Activated CD4-positive, alpha-beta memory T cell treated with anti-CD3 and anti-CD28 coated beads for 36 hours (primary cell): ENCODE measurements at regions of chr5 and their contacts with region 1.

Region 1: GRCh38 chr5:72319976-72320752 is at the starts of genes MRPS27 and PTCD2:
- DNase-seq: peak; percentile 97
- H3K4me3 Mint-ChIP-seq: peak within 1 kb of the TSS; percentile 91
- H3K27ac Mint-ChIP-seq: peak within 1 kb of the TSS; percentile 85
- H3K4me1 Mint-ChIP-seq: peaks cover 32% of the 10 kb centered on the region
- H3K27me3 Mint-ChIP-seq: no peaks in the 10 kb centered on the region
- total RNA-seq, gene MRPS27: 85.9 to 91.4 TPM
- total RNA-seq, gene PTCD2: 10.8 to 12.1 TPM

Region 2: DNA sequence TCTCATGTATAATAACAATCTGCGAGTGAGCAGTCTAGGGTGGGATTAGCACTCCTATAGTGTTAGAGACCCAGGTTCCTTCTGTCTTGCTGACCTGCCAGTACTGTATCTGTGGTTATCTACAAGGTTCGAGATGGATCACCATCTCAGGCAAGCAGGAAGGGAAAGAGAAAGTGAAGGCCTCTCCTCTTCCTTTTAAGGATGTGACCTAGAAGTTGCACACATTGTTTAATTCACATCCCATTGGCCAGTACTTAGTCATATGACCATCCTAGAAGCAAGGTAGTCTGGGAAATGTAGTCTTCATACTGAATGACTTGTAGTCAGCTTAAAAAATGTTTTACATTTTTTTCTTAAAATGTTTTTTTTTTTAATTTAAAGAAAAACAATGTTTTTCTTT is 432.5 kb before region 1 on chr5:
- CTCF ChIA-PET with region 1: no interaction called
- POLR2A ChIA-PET with region 1: no interaction called
- intact Hi-C with region 1: loop called (anchors 1 kb)
- DNase-seq: no peak
- H3K4me3 Mint-ChIP-seq: peak overlapping the region; percentile 24
- H3K27ac Mint-ChIP-seq: no peak overlapping the region
- H3K4me1 Mint-ChIP-seq: no peaks in the 10 kb centered on the region
- H3K27me3 Mint-ChIP-seq: peaks cover 20% of the 10 kb centered on the region

Region 3: DNA sequence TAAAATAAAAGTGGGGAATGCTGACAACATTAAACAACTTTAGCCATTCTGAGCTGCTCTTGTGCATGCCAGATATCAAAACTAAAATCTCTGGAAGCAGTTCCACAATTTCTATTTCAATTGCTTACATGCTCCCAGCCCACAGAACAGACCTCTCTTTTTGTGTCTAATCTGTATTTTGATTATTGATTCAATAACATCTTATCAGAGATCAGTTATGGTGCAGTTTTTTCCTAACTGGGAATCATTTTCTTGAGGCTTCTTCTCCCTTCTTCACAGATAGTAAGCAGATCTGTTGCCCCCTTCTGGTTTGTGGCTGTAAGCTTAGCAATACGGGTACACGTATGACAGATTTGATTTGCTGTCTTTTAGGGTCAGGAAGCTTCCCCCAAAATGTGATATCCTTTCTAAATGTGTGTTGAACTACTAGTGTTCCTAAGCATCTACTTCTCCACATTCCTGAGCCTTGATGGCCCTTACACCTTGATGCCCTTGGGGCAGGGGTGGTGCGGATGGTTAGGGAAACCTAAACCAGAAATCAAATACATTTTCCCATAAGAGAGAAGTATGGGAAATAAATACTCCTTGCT is 39.5 kb before region 1 on chr5:
- CTCF ChIA-PET with region 1: no interaction called
- POLR2A ChIA-PET with region 1: no interaction called
- intact Hi-C with region 1: no loop called
- DNase-seq: no peak
- H3K4me3 Mint-ChIP-seq: no peak overlapping the region
- H3K27ac Mint-ChIP-seq: no peak overlapping the region
- H3K4me1 Mint-ChIP-seq: no peaks in the 10 kb centered on the region
- H3K27me3 Mint-ChIP-seq: no peaks in the 10 kb centered on the region

Region 4: GRCh38 chr5:72307968-72308852 is 12.0 kb before region 1 on chr5:
- CTCF ChIA-PET with region 1: interaction called, 27 read pairs
- POLR2A ChIA-PET with region 1: interaction called, 31 read pairs
- intact Hi-C with region 1: loop called (anchors 1 kb)
- DNase-seq: peak; percentile 97
- H3K4me3 Mint-ChIP-seq: peak overlapping the region; percentile 89
- H3K27ac Mint-ChIP-seq: peak overlapping the region; percentile 87
- H3K4me1 Mint-ChIP-seq: peaks cover 23% of the 10 kb centered on the region
- H3K27me3 Mint-ChIP-seq: no peaks in the 10 kb centered on the region